Prostate gland (tissue), 2 donors: ENCODE measurements at regions of chr1 and their contacts with region 1.

Region 1: DNA sequence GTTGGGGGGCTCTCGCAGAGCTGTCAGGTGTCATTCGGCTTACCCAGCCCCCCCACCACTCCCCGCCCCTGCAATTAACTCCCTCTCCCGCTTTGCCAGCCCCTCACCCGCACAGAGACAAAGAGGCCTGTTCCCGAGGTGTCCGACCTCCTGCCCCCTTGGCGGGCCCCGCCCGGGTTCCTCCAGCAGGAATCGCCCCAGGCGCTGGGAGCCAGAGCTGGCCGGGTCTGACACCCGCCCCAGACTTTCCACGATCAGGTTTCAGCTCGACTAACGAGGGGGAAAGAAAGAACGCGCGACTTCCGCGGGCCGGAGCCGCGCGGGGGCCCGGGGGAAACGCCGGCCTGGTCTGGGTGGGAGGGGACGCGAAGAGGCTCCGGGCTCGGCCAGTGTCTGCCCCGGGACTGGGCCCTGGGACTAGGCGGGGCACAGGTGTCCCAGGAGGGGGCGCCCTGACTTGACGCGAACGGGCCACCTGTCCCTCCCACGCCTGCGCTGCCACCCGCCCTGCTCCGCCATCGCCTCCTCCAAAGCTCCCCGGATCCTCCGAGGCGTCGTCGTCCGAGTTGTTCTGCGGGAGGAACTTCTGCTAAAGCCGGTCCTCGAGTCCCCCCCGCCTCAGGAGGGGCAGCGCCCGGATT is 36.4 kb upstream of the HHAT start:
- DNase-seq: peak; percentile 72
- H3K4me3 ChIP-seq: peak overlapping the region; percentile 36 to 43
- H3K27ac ChIP-seq: peak overlapping the region; percentile 73 to 83
- H3K4me1 ChIP-seq: no peaks in the 10 kb centered on the region
- H3K27me3 ChIP-seq: no peaks in the 10 kb centered on the region
- CTCF ChIP-seq: peak in 3 of 4 experiments; percentile 26 to 58 (median 55)
- POLR2A ChIP-seq: peak; percentile 27

Region 2: GRCh38 chr1:210239349-210240111 is 52.8 kb before region 1 on chr1:
- intact Hi-C with region 1: loop called (anchors 5 kb)
- DNase-seq: no peak
- H3K4me3 ChIP-seq: no peak overlapping the region
- H3K27ac ChIP-seq: no peak overlapping the region
- H3K4me1 ChIP-seq: no peaks in the 10 kb centered on the region
- H3K27me3 ChIP-seq: no peaks in the 10 kb centered on the region
- CTCF ChIP-seq: peak in 1 of 4 experiments; percentile 15
- POLR2A ChIP-seq: no peak